ENCODE measurements at regions of chr6 and their contacts with region 1.

Region 1: GRCh38 chr6:15058190-15059061 is 187.4 kb upstream of the JARID2 start:
- DNase-seq: no peak
- ATAC-seq: no peak

Region 2: DNA sequence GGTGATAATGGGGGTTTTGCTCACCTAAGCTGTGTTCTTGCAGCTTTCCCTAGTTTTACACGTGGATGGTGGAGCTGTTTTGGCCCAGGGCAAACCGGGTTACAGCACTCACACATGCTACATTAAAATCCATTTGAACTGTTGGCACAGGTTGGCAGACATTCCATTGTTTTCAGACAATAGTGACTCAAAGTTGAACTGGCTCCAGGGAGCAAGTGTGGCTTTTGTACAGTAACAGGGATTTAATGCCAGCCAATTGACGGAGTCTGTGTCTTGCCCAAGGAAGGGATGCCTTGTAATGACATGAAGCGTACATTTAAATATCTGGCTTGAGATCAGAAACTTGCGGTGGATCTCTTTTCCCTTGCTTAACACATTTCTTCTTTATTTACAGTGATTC is 421.3 kb after region 1 on chr6:
- intact Hi-C with region 1: loop called in 1 of 2 experiments (anchors 10 kb)
- DNase-seq: no peak
- ATAC-seq: peak; percentile 59 to 62

Region 3: DNA sequence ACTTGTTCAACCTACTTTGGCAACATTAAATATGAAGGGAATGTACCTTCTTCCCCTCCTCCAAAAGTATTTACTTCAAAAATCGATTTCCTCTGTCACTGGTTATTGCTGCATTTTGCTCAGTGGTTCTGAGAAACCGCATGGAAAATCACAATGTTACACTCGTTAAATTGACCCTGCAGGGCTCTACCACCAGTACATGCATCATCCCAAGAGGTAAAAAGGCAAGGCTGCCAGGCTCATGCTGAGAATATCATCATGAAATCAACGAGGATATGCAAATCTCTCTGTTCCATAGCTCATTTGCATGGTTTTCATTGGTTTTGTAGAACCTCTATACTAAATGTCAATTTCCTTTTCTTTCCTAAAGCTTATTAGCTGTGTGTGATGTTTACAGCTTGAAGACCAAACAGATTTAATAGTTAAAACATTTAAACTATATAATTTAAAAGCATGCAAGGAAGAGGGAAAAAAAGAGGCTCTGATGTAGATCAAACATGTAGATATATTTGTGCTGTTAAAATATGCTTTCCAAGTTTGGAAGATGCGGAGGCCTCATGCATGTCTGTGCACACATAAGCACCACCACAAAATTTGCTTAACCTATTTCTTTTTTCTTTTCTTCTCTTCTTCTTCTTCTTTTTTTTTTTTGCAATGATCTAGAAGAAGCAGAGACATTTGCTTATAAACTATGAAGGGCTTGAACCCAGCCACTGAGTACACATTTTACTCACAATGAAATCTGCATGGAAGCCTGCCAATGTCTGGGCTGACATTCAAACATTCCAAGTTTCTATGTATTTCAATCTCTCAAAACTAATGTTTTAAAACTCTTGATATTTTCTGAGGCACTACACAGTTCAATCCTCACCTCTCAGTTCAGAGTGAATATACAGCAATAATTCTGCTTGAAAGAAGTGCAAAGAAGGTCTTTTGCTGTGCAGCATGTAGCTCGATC is 1373.9 kb after region 1 on chr6:
- intact Hi-C with region 1: no loop called
- DNase-seq: peak; percentile 51
- ATAC-seq: peak in 1 of 2 donors; percentile 22

Measured in left cardiac atrium (tissue), 4 donors.